GM12878 (cell line): ENCODE measurements at regions of chr9 and their contacts with region 1.

Region 1: GRCh38 chr9:1939926-1940368 is 75.2 kb upstream of the SMARCA2 start:
- DNase-seq: peak; percentile 82
- ATAC-seq: peak; percentile 87
- H3K4me3 ChIP-seq: peak overlapping the region; percentile 39
- H3K27ac ChIP-seq: peak overlapping the region; percentile 97
- H3K4me1 ChIP-seq: peaks cover 25% of the 10 kb centered on the region
- H3K27me3 ChIP-seq: no peaks in the 10 kb centered on the region
- CTCF ChIP-seq: peak; percentile 94 to 99 (median 97)
- EP300 ChIP-seq: peak; percentile 19 to 23; a peak in 1 of 4 replicates
- POLR2A ChIP-seq: no peak
- RAD21 ChIP-seq: peak; percentile 95

Region 2: GRCh38 chr9:1414701-1415100 is 525.2 kb before region 1 on chr9:
- CTCF ChIA-PET with region 1: no interaction called
- POLR2A ChIA-PET with region 1: no interaction called
- RAD21 ChIA-PET with region 1: no interaction called
- SMC1A ChIA-PET with region 1: no interaction called
- in situ Hi-C with region 1: no loop called
- intact Hi-C with region 1: no loop called
- DNase-seq: no peak
- ATAC-seq: no peak
- H3K4me3 ChIP-seq: no peak overlapping the region
- H3K27ac ChIP-seq: no peak overlapping the region
- H3K4me1 ChIP-seq: no peaks in the 10 kb centered on the region
- H3K27me3 ChIP-seq: no peaks in the 10 kb centered on the region
- CTCF ChIP-seq: no peak
- EP300 ChIP-seq: no peak
- POLR2A ChIP-seq: no peak
- RAD21 ChIP-seq: no peak

Region 3: DNA sequence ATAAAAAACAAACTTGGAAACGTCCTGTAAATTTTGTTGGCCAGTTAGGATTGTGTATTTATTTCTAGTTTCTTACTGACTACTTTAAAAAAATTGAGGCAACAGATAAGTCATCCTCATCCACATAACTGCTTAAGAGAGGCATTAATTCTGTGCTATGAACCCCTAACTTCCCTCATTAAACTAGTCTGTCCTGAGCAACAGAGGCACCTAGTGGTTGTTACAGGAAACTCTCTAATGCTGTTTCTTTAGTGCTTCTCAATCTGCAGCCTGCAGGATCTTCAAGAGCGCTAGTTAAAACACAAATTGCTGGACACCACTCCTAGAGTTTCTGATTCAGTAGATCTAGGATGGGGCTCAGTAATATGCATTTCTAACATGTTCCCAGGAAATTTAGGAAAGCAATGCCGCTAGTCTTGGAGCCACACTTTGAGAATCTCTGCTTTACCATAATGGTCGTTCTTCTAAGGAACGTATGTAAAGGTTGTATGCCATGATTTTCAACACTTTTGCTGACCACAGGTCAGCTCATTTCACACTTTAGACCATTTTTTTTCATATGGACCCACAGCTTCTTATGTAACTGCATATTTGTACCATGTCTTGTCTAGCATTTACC is 334.9 kb before region 1 on chr9:
- CTCF ChIA-PET with region 1: interaction called, 14 read pairs
- POLR2A ChIA-PET with region 1: interaction called, 6 read pairs
- RAD21 ChIA-PET with region 1: interaction called, 6 read pairs
- SMC1A ChIA-PET with region 1: interaction called, 12 read pairs
- in situ Hi-C with region 1: no loop called
- intact Hi-C with region 1: loop called (anchors 1 kb)
- DNase-seq: peak; percentile 11
- ATAC-seq: peak; percentile 98
- H3K4me3 ChIP-seq: no peak overlapping the region
- H3K27ac ChIP-seq: no peak overlapping the region
- H3K4me1 ChIP-seq: no peaks in the 10 kb centered on the region
- H3K27me3 ChIP-seq: no peaks in the 10 kb centered on the region
- CTCF ChIP-seq: peak; percentile 69 to 73 (median 71)
- EP300 ChIP-seq: no peak
- POLR2A ChIP-seq: no peak
- RAD21 ChIP-seq: peak; percentile 99

Region 4: DNA sequence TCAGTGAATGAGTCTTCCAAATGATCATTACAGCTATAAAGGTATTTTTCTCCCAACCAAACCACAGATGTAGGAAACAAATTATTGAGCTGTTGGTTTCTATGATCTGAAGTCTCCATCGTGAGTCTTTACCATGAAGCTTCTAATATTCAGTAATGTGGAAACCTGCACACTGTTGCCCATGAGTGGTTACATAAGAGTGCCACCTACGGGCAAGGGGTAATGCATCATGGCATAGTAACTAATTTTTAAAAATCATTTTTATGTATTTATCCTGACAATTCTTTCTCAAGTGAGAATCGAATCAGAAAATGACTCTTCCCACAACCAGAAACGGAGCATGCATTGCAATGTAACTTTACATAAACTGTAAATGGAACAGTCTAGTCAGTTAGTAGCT is 207.3 kb before region 1 on chr9:
- CTCF ChIA-PET with region 1: interaction called, 27 read pairs
- POLR2A ChIA-PET with region 1: no interaction called
- RAD21 ChIA-PET with region 1: interaction called, 37 read pairs
- SMC1A ChIA-PET with region 1: interaction called, 39 read pairs
- in situ Hi-C with region 1: no loop called
- intact Hi-C with region 1: loop called (anchors 1 kb)
- DNase-seq: no peak
- ATAC-seq: peak; percentile 84
- H3K4me3 ChIP-seq: no peak overlapping the region
- H3K27ac ChIP-seq: no peak overlapping the region
- H3K4me1 ChIP-seq: no peaks in the 10 kb centered on the region
- H3K27me3 ChIP-seq: no peaks in the 10 kb centered on the region
- CTCF ChIP-seq: peak; percentile 39 to 47 (median 43); a peak in 5 of 6 replicates
- EP300 ChIP-seq: no peak
- POLR2A ChIP-seq: no peak
- RAD21 ChIP-seq: peak; percentile 49

Region 5: DNA sequence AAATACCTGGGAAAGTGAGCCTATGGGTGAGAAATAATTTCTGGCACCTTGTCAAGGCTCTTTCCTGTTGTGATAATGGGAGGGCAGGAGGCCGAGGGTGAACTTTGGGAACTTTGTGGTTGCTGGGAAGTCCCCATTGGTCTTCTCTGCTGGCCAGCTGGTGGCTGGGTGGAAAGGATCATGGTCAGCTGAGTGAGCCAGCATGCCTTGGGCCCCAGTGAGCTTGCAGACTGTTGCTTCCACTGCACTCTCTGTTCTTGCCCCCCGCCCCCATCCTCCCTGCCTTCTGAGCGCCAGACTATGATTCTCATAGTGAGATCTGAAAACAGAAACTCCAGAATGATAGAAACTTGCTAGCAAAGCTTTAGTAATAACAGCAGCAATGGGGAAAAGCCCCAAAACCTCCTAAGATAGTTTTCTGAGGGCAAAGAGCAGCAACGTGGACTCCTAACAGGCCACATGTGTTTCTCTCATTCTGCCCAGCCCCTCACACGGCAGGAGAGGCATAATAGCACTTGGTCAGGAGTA is 64.0 kb before region 1 on chr9:
- CTCF ChIA-PET with region 1: interaction called, 94 read pairs
- POLR2A ChIA-PET with region 1: interaction called, 11 read pairs
- RAD21 ChIA-PET with region 1: interaction called, 50 read pairs
- SMC1A ChIA-PET with region 1: interaction called, 55 read pairs
- in situ Hi-C with region 1: loop called (anchors 5 kb)
- intact Hi-C with region 1: loop called (anchors 1 kb)
- DNase-seq: peak; percentile 97
- ATAC-seq: peak; percentile 79
- H3K4me3 ChIP-seq: peak overlapping the region; percentile 37
- H3K27ac ChIP-seq: peak overlapping the region; percentile 98
- H3K4me1 ChIP-seq: peaks cover 63% of the 10 kb centered on the region
- H3K27me3 ChIP-seq: no peaks in the 10 kb centered on the region
- CTCF ChIP-seq: no peak
- EP300 ChIP-seq: peak; percentile 90 to 97
- POLR2A ChIP-seq: peak; percentile 67
- RAD21 ChIP-seq: peak; percentile 38

Region 6: GRCh38 chr9:2014696-2015580 is 75.0 kb after region 1 on chr9 and contains the start of gene SMARCA2:
- CTCF ChIA-PET with region 1: interaction called, 22 read pairs
- POLR2A ChIA-PET with region 1: interaction called, 7 read pairs
- RAD21 ChIA-PET with region 1: interaction called, 9 read pairs
- SMC1A ChIA-PET with region 1: interaction called, 27 read pairs
- in situ Hi-C with region 1: no loop called
- intact Hi-C with region 1: loop called (anchors 2 kb)
- DNase-seq: peak; percentile 86
- ATAC-seq: peak; percentile 81
- H3K4me3 ChIP-seq: peak within 1 kb of the TSS; percentile 95
- H3K27ac ChIP-seq: peak within 1 kb of the TSS; percentile 91
- H3K4me1 ChIP-seq: peaks cover 17% of the 10 kb centered on the region; the same call in 1 of the 2 replicates
- H3K27me3 ChIP-seq: no peaks in the 10 kb centered on the region
- CTCF ChIP-seq: no peak
- EP300 ChIP-seq: 0 out of 4 replicates have a peak, but pooled peaks of 1 of the 2 experiments have one; percentile 16
- POLR2A ChIP-seq: peak; percentile 98
- RAD21 ChIP-seq: no peak
- polyA plus RNA-seq, gene SMARCA2: 100 to 130 TPM